Pancreas (tissue), 10 donors: ENCODE measurements at regions of chr3 and their contacts with region 1.

Region 1: DNA sequence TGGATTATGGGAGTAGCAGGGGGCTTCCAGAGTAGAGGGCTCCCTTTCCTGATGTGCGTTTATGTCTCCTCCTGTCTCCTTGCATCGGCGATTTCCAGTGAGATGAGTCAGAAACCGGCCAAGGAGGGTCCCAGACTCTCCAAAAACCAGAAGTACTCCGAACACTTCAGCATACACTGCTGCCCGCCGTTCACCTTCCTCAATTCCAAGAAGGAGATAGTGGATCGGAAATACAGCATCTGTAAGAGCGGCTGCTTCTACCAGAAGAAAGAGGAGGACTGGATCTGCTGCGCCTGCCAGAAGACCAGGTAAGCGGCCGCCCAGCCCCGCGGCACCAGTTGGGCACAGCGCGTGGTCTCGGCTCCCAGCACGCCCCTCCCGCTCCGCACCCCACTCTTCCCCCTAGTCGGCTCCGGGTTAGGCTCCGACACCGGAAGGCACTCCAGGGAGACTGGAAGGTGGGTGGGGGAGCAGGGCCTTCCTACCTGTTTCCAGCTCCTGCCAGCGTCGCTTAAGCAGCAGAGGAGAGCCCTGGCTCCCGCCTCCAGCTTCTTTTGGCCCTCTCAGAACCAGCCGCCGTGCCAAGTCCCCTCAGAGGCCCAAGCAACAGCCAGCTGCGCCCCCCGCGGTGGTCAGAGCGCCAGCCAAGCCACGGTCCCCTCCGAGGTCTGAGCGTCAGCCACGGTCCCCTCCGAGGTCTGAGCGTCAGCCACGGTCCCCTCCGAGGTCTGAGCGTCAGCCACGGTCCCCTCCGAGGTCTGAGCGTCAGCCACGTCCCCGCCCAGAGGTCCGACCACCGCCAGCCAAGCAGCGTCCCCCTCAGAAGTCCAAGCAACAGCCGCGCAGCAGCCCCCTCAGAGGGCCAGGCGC is 34.7 kb downstream of the MOBP start:
- DNase-seq: peak in 2 of 6 donors; percentile 61
- ATAC-seq: peak in 3 of 4 donors; percentile 26 to 29 (median 28)
- H3K4me3 ChIP-seq: peak overlapping the region in 1 of 4 donors; percentile 17
- H3K27ac ChIP-seq: no peak overlapping the region
- H3K4me1 ChIP-seq: no peaks in the 10 kb centered on the region
- H3K27me3 ChIP-seq: peaks cover 0 to 13% (median 0%) of the 10 kb centered on the region in 4 donors
- CTCF ChIP-seq: no peak

Region 2: GRCh38 chr3:39447637-39448483 is 54.3 kb before region 1 on chr3:
- intact Hi-C with region 1: loop called in 2 of 3 experiments (anchors 10 kb)
- DNase-seq: peak in 4 of 6 donors; percentile 30 to 74 (median 61)
- ATAC-seq: peak; percentile 90 to 99 (median 98)
- H3K4me3 ChIP-seq: no peak overlapping the region
- H3K27ac ChIP-seq: no peak overlapping the region
- H3K4me1 ChIP-seq: peaks cover 0 to 3% (median 0%) of the 10 kb centered on the region in 3 donors
- H3K27me3 ChIP-seq: no peaks in the 10 kb centered on the region
- CTCF ChIP-seq: peak; percentile 82 to 91 (median 87)

Region 3: GRCh38 chr3:39965997-39966396 is 463.8 kb after region 1 on chr3:
- intact Hi-C with region 1: no loop called
- DNase-seq: no peak
- ATAC-seq: peak in 2 of 4 donors; percentile 42 to 58
- H3K4me3 ChIP-seq: no peak overlapping the region
- H3K27ac ChIP-seq: no peak overlapping the region
- H3K4me1 ChIP-seq: peaks cover 0 to 5% (median 0%) of the 10 kb centered on the region in 3 donors
- H3K27me3 ChIP-seq: no peaks in the 10 kb centered on the region
- CTCF ChIP-seq: no peak